T-cell (primary cell): ENCODE measurements at regions of chr4 and their contacts with region 1.

Region 1: GRCh38 chr4:1381944-1382541 is 24.2 kb downstream of the NKX1-1 start:
- DNase-seq: peak in 1 of 35 experiments; percentile 2
- ATAC-seq: no peak
- H3K4me3 ChIP-seq: no peak overlapping the region
- H3K4me3 Mint-ChIP-seq: no peak overlapping the region
- H3K27ac ChIP-seq: no peak overlapping the region
- H3K27ac Mint-ChIP-seq: no peak overlapping the region
- H3K4me1 ChIP-seq: no peaks in the 10 kb centered on the region
- H3K4me1 Mint-ChIP-seq: no peaks in the 10 kb centered on the region
- H3K27me3 ChIP-seq: no peaks in the 10 kb centered on the region
- H3K27me3 Mint-ChIP-seq: no peaks in the 10 kb centered on the region

Region 2: DNA sequence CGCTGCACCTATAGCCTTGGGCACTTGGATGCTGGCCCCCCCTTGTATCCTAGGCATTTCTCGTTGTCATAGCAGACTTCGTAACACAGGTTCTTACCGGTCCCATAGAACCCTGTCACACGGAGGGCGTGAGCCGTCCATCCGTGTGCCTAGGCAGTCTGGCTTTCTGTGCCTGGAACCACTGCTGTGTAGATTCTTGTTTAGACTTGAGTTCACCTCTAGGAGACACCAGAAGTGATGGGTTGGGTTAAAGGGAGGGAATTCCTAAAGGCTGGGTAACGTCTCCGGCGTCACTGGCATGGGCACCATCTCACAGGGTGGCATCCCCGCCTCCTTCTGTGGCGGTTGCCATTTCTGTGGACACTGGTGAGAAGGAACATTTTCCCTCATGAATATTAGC is 37.7 kb after region 1 on chr4:
- CTCF ChIA-PET with region 1: no interaction called
- POLR2A ChIA-PET with region 1: no interaction called
- DNase-seq: peak in 1 of 35 experiments; percentile 2
- ATAC-seq: no peak
- H3K4me3 ChIP-seq: no peak overlapping the region
- H3K4me3 Mint-ChIP-seq: no peak overlapping the region
- H3K27ac ChIP-seq: no peak overlapping the region
- H3K27ac Mint-ChIP-seq: no peak overlapping the region
- H3K4me1 ChIP-seq: no peaks in the 10 kb centered on the region
- H3K4me1 Mint-ChIP-seq: peaks cover 0 to 7% (median 4%) of the 10 kb centered on the region in 3 donors
- H3K27me3 ChIP-seq: peaks cover 7 to 50% of the 10 kb centered on the region in 2 experiments
- H3K27me3 Mint-ChIP-seq: peaks cover 25 to 58% of the 10 kb centered on the region in 2 donors

Region 3: DNA sequence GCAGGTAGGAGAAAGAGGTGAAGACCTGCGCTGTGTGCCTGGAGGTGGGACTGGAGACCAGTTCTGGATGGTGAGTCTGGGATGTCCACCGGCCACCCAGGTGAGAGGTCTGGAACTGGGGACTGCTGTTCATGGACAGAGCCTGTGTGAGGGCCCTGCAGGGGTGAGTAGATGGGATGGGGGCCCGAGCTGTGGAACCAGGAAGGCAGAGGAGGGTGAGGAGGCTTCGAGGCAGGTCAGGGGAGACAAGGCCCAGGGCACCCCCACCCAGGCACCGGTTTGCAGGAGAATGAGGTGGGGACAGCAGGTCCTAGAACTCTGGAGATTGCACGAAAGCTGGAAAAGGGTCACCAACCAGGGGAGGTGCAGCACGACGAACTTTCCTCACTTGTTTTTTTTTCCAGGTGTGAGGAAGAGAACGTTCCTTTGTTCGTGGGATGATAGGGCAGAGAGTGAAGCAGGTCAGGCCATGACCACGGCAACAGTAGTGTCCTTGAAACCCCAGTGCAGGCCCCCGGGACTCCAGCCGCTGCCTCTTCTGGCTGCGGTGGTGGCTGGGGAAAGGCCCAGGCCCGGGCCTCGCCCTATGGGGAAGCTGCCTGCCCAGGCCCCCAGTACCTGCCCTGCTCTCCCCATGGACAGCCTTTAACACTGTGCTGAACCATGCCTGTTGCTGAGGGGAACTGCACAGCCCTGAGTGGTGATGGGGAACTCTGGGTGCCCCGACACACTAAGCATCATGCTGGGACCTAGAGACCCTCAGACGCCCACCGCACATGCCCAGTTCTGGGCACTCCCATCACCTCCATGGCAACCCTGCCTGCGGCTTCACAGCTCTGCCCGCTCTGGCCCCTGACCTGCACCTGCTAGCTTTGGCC is 1351.2 kb after region 1 on chr4:
- CTCF ChIA-PET with region 1: no interaction called
- POLR2A ChIA-PET with region 1: interaction called in 1 of 2 experiments, 11 read pairs
- DNase-seq: no peak
- ATAC-seq: no peak
- H3K4me3 ChIP-seq: no peak overlapping the region
- H3K4me3 Mint-ChIP-seq: no peak overlapping the region
- H3K27ac ChIP-seq: no peak overlapping the region
- H3K27ac Mint-ChIP-seq: no peak overlapping the region
- H3K4me1 ChIP-seq: no peaks in the 10 kb centered on the region
- H3K4me1 Mint-ChIP-seq: peaks cover 0 to 5% (median 1%) of the 10 kb centered on the region in 3 donors
- H3K27me3 ChIP-seq: no peaks in the 10 kb centered on the region
- H3K27me3 Mint-ChIP-seq: no peaks in the 10 kb centered on the region